A673 (cell line): ENCODE measurements at regions of chr17 and their contacts with region 1.

Region 1: DNA sequence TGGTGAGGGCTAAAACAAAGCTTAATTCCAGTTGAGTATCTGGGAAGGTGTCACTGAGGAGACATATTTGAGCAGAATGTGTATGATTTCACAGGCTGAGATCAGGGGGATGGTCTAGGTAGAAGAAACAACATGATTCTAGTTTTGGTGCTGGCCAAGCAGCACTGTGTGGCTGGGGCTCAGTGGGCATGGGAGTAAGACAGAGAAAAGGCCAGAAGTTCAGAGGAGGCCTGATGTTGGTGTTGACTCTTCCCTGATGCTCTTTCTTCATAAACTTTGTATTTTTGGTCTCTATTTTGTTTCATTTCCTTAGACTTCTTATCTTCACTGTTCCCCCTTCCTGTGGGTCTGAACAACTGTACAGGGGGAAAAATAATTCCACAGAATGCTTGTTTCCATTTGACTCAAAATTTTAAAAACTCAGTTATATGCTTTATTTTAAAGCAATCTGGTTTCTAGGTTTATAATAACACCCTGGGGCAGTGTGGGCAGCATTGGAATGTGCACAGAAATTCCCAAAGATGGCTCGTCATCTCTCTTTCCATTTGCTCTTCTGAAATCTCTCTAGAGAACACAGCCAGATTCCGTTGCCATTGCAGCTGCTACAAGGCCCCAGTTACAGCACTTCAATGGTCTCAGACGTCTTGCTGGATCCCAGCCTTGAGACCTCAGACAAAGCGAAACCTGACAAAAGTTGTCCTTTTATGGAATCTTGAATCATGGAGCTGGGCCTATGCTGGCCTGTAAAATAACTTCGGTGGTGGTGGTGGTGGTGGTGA is 68.3 kb downstream of the SNX11 start:
- DNase-seq: no peak
- H3K4me3 ChIP-seq: no peak overlapping the region
- H3K27ac ChIP-seq: no peak overlapping the region
- H3K4me1 ChIP-seq: peaks cover 21% of the 10 kb centered on the region
- H3K27me3 ChIP-seq: no peaks in the 10 kb centered on the region
- CTCF ChIP-seq: no peak

Region 2: GRCh38 chr17:48023408-48024148 is 152.3 kb before region 1 on chr17:
- CTCF ChIA-PET with region 1: no interaction called
- POLR2A ChIA-PET with region 1: no interaction called
- intact Hi-C with region 1: no loop called
- DNase-seq: peak; percentile 93
- H3K4me3 ChIP-seq: peak overlapping the region; percentile 46
- H3K27ac ChIP-seq: peak overlapping the region; percentile 57
- H3K4me1 ChIP-seq: peaks cover 44% of the 10 kb centered on the region
- H3K27me3 ChIP-seq: no peaks in the 10 kb centered on the region
- CTCF ChIP-seq: peak; percentile 37; the same call in 1 of the 2 replicates

Region 3: GRCh38 chr17:48162946-48163506 is 12.9 kb before region 1 on chr17:
- CTCF ChIA-PET with region 1: interaction called, 3 read pairs
- POLR2A ChIA-PET with region 1: no interaction called
- intact Hi-C with region 1: loop called (anchors 2 kb)
- DNase-seq: peak; percentile 91
- H3K4me3 ChIP-seq: peak overlapping the region; percentile 24
- H3K27ac ChIP-seq: no peak overlapping the region
- H3K4me1 ChIP-seq: peaks cover 20% of the 10 kb centered on the region
- H3K27me3 ChIP-seq: no peaks in the 10 kb centered on the region
- CTCF ChIP-seq: no peak

Region 4: GRCh38 chr17:48295362-48296288 is 119.7 kb after region 1 on chr17:
- CTCF ChIA-PET with region 1: no interaction called
- POLR2A ChIA-PET with region 1: no interaction called
- intact Hi-C with region 1: no loop called
- DNase-seq: peak; percentile 45
- H3K4me3 ChIP-seq: no peak overlapping the region
- H3K27ac ChIP-seq: peak overlapping the region; percentile 43
- H3K4me1 ChIP-seq: peaks cover 19% of the 10 kb centered on the region
- H3K27me3 ChIP-seq: no peaks in the 10 kb centered on the region
- CTCF ChIP-seq: no peak